ENCODE measurements at regions of chr3 and their contacts with region 1.

Region 1: GRCh38 chr3:68876112-68876713 is 56.1 kb downstream of the TAFA4 start:
- DNase-seq: no peak
- H3K4me3 ChIP-seq: no peak overlapping the region
- H3K27ac ChIP-seq: no peak overlapping the region
- H3K4me1 ChIP-seq: no peaks in the 10 kb centered on the region
- H3K27me3 ChIP-seq: peaks cover 0 to 2% of the 10 kb centered on the region in 2 donors
- CTCF ChIP-seq: peak; percentile 84 to 89

Region 2: GRCh38 chr3:67384760-67385397 is 1491.3 kb before region 1 on chr3:
- intact Hi-C with region 1: loop called (anchors 10 kb)
- DNase-seq: no peak
- H3K4me3 ChIP-seq: no peak overlapping the region
- H3K27ac ChIP-seq: no peak overlapping the region
- H3K4me1 ChIP-seq: peaks cover 0 to 37% (median 22%) of the 10 kb centered on the region in 4 donors
- H3K27me3 ChIP-seq: no peaks in the 10 kb centered on the region
- CTCF ChIP-seq: no peak

Region 3: DNA sequence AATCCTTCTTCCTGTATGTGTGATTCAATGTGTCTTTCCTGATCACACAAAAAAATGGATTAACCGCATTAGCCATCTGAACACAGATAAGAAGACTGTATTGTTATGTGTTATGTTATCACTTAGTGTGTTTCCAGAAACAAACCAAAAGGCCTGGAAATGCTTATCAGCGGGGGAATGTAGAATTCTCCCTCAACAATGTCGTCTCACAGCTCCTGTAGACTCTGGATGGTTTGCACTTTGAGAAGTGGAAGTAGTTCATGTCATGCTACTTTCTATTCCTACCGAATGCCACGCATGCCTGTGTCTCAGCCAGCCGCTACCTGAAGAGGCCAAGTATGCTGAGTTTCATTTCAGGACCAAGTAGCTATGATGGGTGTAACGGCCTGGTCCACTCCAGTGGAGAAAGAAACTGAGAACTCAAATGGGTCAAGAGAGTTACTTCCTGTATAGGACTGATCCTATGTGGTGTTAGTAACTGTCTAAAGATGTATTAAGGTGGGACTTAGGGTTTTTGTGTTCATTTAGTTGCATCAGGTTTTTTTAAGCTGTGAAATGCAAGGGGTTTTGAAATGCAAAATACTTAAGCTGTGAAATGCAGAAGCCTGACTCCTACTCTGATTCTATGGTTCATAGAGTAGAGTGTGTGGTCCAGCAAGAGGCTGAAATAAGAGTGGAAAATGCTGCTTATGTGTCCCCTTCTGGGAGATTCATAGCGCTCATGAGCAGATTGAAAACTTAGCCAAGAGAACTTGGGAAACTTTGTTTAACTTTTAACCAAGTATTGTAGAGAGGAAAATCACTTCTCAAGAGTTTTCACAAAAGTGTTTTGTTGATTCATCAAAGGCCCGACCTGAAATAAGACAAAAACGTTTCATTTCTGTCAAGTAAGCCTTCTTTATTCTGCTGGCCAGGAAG is 364.7 kb after region 1 on chr3:
- intact Hi-C with region 1: no loop called
- DNase-seq: no peak
- H3K4me3 ChIP-seq: no peak overlapping the region
- H3K27ac ChIP-seq: no peak overlapping the region
- H3K4me1 ChIP-seq: peaks cover 0 to 4% (median 1%) of the 10 kb centered on the region in 4 donors
- H3K27me3 ChIP-seq: no peaks in the 10 kb centered on the region
- CTCF ChIP-seq: no peak

Measured in tibial artery (tissue), 4 donors.